CD4-positive, alpha-beta memory T cell (primary cell): ENCODE measurements at regions of chr15 and their contacts with region 1.

Region 1: GRCh38 chr15:44663409-44664308 is at the start of gene SPG11:
- DNase-seq: peak; percentile 93 to 97 (median 94)
- H3K4me3 ChIP-seq: peak within 1 kb of the TSS; percentile 49 to 81
- H3K4me3 Mint-ChIP-seq: peak within 1 kb of the TSS; percentile 94 to 99 (median 98)
- H3K27ac ChIP-seq: peak within 1 kb of the TSS; percentile 96
- H3K27ac Mint-ChIP-seq: peak within 1 kb of the TSS; percentile 93 to 100 (median 97)
- H3K4me1 ChIP-seq: peaks cover 69% of the 10 kb centered on the region
- H3K4me1 Mint-ChIP-seq: peaks cover 47 to 75% (median 58%) of the 10 kb centered on the region in 4 donors
- H3K27me3 ChIP-seq: no peaks in the 10 kb centered on the region
- H3K27me3 Mint-ChIP-seq: no peaks in the 10 kb centered on the region
- total RNA-seq, gene SPG11: 112 to 121 TPM

Region 2: DNA sequence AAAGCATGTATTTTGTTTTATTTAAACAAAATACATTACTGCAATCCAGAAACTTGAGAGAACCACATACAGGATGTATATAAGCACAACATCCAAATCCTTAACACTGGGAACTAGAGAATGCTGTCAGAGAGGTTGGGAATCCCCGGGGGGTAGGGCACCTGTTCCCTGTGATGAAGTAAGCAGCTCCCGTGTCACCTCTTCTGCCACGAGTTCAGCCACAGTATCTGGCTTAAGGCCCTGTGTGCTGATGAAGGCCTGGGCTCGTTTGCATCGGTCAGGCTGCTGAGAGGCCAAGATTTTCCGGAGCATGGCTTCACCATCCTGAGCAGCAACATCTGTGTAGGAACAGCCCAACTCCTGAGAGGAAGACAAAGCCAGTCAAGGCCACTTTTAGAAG is 90.3 kb before region 1 on chr15:
- CTCF ChIA-PET with region 1: interaction called, 5 read pairs
- POLR2A ChIA-PET with region 1: interaction called, 24 read pairs
- intact Hi-C with region 1: loop called (anchors 5 kb)
- DNase-seq: no peak
- H3K4me3 ChIP-seq: no peak overlapping the region
- H3K4me3 Mint-ChIP-seq: no peak overlapping the region
- H3K27ac ChIP-seq: no peak overlapping the region
- H3K27ac Mint-ChIP-seq: no peak overlapping the region
- H3K4me1 ChIP-seq: peaks cover 3% of the 10 kb centered on the region
- H3K4me1 Mint-ChIP-seq: peaks cover 5 to 17% (median 10%) of the 10 kb centered on the region in 4 donors
- H3K27me3 ChIP-seq: no peaks in the 10 kb centered on the region
- H3K27me3 Mint-ChIP-seq: no peaks in the 10 kb centered on the region

Region 3: DNA sequence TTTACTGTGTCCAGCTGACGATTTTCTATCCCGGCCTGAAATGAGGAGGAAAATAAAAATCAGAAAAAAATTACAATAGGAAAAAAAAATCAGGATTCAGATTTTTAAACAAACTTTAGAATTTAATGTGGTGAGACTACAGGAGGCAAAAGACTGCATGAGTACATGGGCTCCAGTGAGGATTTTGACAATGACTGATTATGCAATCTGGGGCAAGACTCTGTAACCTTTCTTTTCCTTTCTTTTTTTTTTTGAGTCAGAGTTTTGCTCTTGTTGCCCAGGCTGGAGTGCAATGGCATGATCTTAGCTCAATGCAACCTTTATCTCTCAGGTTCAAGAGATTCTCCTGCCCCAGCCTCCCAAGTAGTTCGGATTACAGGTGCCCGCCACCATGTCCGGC is 30.1 kb before region 1 on chr15:
- CTCF ChIA-PET with region 1: interaction called, 5 read pairs
- POLR2A ChIA-PET with region 1: interaction called, 14 read pairs
- intact Hi-C with region 1: no loop called
- DNase-seq: no peak
- H3K4me3 ChIP-seq: no peak overlapping the region
- H3K4me3 Mint-ChIP-seq: no peak overlapping the region
- H3K27ac ChIP-seq: no peak overlapping the region
- H3K27ac Mint-ChIP-seq: peak overlapping the region in 4 of 7 donors; percentile 9 to 69 (median 36)
- H3K4me1 ChIP-seq: no peaks in the 10 kb centered on the region
- H3K4me1 Mint-ChIP-seq: peaks cover 4 to 9% (median 7%) of the 10 kb centered on the region in 4 donors
- H3K27me3 ChIP-seq: no peaks in the 10 kb centered on the region
- H3K27me3 Mint-ChIP-seq: no peaks in the 10 kb centered on the region

Region 4: DNA sequence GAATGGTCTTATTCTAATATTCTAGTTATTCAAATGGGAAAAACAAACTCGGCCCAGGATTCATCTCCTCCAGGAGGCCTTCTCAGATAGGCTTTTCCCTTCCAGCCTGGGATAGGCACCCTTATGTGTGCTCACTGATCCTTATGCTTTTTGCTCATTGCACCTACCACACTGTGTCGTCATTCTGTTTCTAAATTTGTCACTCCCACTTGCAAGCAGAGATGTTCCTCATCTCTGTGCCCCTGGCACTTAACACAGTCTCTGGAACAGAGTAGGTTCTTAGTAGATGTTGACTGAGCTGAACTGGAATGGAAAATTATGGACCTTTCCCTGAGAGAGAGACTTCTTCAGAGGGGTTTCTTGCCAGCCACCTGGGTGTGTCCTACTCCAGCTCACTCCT is 18.6 kb after region 1 on chr15:
- CTCF ChIA-PET with region 1: interaction called, 107 read pairs
- POLR2A ChIA-PET with region 1: interaction called, 1,003 read pairs
- intact Hi-C with region 1: loop called (anchors 1 kb)
- DNase-seq: no peak
- H3K4me3 ChIP-seq: peak overlapping the region in 1 of 2 donors; percentile 13
- H3K4me3 Mint-ChIP-seq: peak overlapping the region in 7 of 8 donors; percentile 64 to 82 (median 75)
- H3K27ac ChIP-seq: peak overlapping the region; percentile 70
- H3K27ac Mint-ChIP-seq: peak overlapping the region; percentile 86 to 96 (median 93)
- H3K4me1 ChIP-seq: peaks cover 75% of the 10 kb centered on the region
- H3K4me1 Mint-ChIP-seq: peaks cover 66 to 99% (median 83%) of the 10 kb centered on the region in 4 donors
- H3K27me3 ChIP-seq: no peaks in the 10 kb centered on the region
- H3K27me3 Mint-ChIP-seq: no peaks in the 10 kb centered on the region

Region 5: DNA sequence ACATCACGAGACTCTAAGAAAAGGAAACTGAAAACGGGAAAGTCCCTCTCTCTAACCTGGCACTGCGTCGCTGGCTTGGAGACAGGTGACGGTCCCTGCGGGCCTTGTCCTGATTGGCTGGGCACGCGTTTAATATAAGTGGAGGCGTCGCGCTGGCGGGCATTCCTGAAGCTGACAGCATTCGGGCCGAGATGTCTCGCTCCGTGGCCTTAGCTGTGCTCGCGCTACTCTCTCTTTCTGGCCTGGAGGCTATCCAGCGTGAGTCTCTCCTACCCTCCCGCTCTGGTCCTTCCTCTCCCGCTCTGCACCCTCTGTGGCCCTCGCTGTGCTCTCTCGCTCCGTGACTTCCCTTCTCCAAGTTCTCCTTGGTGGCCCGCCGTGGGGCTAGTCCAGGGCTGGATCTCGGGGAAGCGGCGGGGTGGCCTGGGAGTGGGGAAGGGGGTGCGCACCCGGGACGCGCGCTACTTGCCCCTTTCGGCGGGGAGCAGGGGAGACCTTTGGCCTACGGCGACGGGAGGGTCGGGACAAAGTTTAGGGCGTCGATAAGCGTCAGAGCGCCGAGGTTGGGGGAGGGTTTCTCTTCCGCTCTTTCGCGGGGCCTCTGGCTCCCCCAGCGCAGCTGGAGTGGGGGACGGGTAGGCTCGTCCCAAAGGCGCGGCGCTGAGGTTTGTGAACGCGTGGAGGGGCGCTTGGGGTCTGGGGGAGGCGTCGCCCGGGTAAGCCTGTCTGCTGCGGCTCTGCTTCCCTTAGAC is 47.9 kb after region 1 on chr15 and contains the start of gene B2M:
- CTCF ChIA-PET with region 1: interaction called, 821 read pairs
- POLR2A ChIA-PET with region 1: interaction called, 5,737 read pairs
- intact Hi-C with region 1: loop called (anchors 1 kb)
- DNase-seq: peak; percentile 96 to 98 (median 97)
- H3K4me3 ChIP-seq: peak within 1 kb of the TSS; percentile 94
- H3K4me3 Mint-ChIP-seq: peak within 1 kb of the TSS; percentile 90 to 100 (median 99)
- H3K27ac ChIP-seq: peak within 1 kb of the TSS; percentile 99
- H3K27ac Mint-ChIP-seq: peak within 1 kb of the TSS; percentile 100
- H3K4me1 ChIP-seq: peaks cover 38% of the 10 kb centered on the region
- H3K4me1 Mint-ChIP-seq: peaks cover 33 to 75% (median 49%) of the 10 kb centered on the region in 4 donors
- H3K27me3 ChIP-seq: no peaks in the 10 kb centered on the region
- H3K27me3 Mint-ChIP-seq: no peaks in the 10 kb centered on the region
- total RNA-seq, gene B2M: 7,421 to 7,929 TPM